ENCODE measurements at regions of chr7 and their contacts with region 1.

Region 1: DNA sequence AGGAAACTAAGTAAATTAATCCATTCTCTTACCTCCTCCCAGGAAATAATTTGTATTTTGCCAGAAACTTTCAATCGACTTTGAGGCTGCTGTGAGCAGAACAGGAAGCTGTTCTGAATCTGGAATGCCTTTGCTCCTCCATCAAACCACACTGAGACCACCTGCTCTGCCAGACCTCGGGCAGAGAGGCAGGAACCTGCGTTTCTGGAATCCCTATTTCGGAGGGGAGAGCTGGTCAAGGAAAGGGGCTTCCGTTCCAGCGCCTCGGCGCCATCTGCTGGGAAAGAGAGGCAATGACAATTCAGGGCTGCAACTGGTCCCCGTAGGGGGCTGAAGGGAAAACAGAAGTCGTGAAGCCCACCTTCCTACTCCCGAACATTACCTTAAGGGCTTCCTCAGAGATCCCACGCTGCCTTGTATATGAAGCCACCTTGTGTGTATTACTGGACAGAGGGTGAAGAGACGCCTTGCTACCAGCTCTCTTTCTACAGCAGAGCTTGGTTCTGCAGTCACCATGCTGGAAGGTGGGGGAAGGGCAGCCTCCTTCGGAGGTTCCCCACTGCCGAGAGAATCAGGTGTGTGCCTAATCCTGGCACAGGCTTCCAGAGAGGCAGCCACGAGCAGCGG is 31.2 kb downstream of the ZNF467 start:
- DNase-seq: no peak
- H3K4me3 ChIP-seq: peak overlapping the region; percentile 45
- CTCF ChIP-seq: peak; percentile 92

Region 2: GRCh38 chr7:149624419-149625339 is 117.5 kb before region 1 on chr7:
- CTCF ChIA-PET with region 1: interaction called, 17 read pairs
- POLR2A ChIA-PET with region 1: no interaction called
- DNase-seq: peak; percentile 31
- H3K4me3 ChIP-seq: peak overlapping the region; percentile 91
- CTCF ChIP-seq: peak; percentile 92

Region 3: DNA sequence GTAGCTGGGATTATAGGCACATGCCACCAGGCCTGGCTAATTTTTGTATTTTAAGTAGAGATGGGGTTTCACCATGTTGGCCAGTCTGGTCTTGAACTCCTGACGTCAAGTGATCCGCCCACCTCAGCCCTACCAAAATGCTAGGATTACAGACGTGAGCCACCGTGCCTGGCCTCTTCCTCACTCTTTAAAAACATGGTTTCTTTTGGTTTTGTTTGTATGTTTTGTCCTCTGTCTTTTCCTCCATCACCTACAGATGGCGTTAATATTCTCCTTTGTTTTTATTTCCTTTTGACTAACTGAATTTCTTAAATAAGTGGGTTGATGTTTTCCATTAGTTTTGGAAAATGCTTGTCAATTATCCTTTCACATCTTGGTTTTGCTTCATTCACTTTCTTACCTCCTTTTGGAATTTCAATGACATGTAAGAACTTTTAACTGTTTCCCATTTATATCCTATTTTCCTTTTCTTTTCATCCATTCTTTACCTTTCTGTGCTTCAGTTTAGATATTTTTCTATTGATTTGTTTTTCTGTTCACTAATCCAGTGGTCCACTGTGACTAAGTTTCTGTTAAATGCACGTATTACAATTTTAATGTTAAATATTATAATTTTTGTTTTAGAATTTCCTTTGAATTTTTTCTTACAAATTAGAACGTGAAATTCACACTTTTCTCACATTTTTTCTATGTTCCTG is 72.9 kb before region 1 on chr7:
- CTCF ChIA-PET with region 1: interaction called, 101 read pairs
- POLR2A ChIA-PET with region 1: no interaction called
- DNase-seq: no peak
- H3K4me3 ChIP-seq: no peak overlapping the region
- CTCF ChIP-seq: peak; percentile 17

Region 4: DNA sequence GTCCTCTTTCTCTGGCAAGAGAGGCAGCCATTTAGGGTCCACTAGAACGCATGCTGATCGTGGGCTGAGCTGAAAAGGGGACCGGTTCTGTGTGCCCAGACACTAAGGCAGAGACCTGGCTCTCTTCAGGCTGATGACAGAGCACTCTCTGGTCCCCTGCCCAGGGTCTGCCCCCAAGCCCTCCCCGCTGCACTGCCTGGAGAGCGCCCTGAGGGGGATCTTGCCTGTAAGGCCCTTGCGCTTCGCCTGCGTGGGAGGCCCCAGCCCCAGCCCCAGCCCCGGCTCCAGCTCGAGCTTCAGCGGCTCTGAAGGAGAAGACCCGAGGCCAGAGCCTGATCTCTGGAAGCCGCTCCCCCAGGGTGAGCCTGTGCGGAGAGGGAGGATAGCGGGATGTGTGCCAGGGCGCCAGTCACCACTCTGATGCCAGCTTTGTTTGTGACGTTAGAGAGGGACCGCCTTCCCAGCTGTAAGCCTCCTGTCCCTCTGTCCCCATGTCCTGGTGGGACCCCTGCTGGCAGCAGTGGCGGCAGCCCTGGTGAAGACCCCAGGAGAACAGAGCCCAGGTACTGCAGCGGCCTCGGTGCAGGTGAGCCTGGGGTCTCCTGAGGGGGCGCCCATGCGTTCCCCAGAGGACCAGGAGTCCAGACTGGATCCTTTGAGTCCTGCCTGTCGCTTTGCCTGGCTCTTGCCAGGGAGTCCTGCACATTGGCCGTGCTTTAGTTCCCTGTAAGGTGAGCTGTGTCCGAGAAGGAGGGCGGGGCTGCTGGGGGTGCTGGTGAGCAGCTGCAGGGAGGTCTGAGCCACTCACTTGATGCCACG is 12.0 kb before region 1 on chr7:
- CTCF ChIA-PET with region 1: interaction called, 46 read pairs
- POLR2A ChIA-PET with region 1: no interaction called
- DNase-seq: no peak
- H3K4me3 ChIP-seq: no peak overlapping the region
- CTCF ChIP-seq: no peak

Region 5: GRCh38 chr7:149759111-149759860 is 17.1 kb after region 1 on chr7:
- CTCF ChIA-PET with region 1: interaction called, 13 read pairs
- POLR2A ChIA-PET with region 1: no interaction called
- DNase-seq: no peak
- H3K4me3 ChIP-seq: no peak overlapping the region
- CTCF ChIP-seq: no peak

Region 6: GRCh38 chr7:149854611-149855360 is 112.6 kb after region 1 on chr7:
- CTCF ChIA-PET with region 1: no interaction called
- POLR2A ChIA-PET with region 1: no interaction called
- DNase-seq: peak; percentile 5
- H3K4me3 ChIP-seq: peak overlapping the region; percentile 2; the same call in 1 of the 2 replicates
- CTCF ChIP-seq: no peak